ENCODE measurements at regions of chr1 and their contacts with region 1.

Region 1: DNA sequence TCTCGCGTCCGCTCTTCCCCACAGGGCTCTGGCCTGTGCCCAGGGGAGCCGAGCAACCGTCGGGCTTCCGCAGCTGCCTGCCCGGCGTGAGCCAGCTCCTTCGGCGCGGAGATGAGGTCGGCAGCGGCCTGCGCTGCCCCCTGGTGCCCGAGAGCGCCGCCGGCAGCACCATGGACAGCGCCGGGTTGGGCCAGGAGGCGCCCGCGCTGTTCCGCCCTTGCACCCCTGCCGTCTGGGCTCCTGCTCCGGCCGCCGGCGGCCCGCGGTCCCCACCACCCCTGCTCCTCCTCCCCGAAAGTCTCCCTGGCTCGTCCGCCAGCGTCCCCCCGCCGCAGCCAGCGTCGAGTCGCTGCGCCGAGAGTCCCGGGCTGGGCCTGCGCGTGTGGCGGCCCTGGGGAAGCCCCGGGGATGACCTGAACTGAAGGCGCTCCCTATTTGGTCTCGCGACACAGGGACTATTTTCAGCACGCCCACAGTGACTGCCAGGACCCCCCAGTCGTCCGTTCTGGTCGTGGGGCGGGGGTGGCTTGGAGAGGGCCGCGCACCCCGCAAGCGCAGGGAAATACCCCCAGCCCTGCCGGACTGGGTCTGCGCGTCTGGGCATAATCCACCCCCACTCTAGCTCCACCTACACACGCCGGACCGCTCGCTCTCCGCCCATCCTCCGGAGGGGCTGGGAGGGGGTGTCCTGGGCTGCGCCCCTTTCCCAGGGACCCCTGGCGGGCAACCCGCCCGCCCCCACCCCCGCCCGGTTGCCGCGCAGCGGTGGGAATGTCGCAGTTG is 1.3 kb downstream of the HES3 start:
- DNase-seq: peak; percentile 84
- ATAC-seq: peak; percentile 78
- H3K4me3 ChIP-seq: no peak overlapping the region
- H3K4me3 Mint-ChIP-seq: no peak overlapping the region
- H3K27ac ChIP-seq: no peak overlapping the region
- H3K27ac Mint-ChIP-seq: no peak overlapping the region
- H3K4me1 ChIP-seq: peaks cover 33% of the 10 kb centered on the region in 2 donors
- H3K4me1 Mint-ChIP-seq: peaks cover 20% of the 10 kb centered on the region
- H3K27me3 ChIP-seq: peaks cover 0 to 81% (median 45%) of the 10 kb centered on the region in 4 experiments
- H3K27me3 Mint-ChIP-seq: peaks cover 40% of the 10 kb centered on the region
- CTCF ChIP-seq: peak; percentile 72

Region 2: DNA sequence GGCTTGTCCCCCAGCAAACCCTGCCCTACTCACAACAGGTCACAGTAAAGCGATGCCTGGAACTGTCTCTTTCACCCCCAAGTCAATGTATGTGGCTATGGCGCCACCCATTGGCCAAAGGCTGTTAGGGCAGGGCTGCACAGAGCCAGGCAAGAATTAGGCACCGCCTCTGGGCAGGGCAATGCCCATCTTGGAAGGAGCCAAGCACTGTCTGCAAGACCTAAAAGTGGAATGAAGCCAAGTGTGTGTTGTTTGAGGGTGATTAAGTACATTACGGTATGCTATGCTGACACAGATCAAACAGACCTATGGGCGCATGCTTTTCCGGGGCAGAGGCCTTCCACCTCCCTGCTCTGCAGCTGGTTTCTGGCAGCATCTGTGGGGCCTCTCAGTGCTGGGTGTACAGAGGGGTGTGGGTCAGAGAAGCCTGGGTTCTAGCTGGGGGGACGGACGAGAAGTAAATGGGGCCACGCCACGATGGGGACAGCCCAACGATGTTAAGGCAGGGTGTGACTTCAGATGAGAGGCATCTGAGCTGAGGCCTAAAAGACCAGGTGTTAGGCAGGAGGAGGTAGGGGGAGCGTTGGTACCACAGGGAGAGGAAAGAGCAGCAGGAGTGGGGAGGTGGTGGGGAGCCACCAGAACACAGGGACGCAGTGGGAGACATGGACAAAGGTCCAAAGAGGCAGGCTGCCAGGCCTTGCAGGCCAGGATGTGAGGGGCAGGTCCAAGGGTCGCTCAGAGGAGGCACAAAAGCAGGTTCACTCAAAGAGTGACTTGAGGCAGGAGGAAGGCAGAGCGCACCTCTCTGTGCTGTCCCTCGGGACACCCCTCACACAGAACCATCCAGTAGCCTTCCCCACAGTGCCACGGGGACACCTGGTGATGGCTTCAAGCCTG is 98.5 kb after region 1 on chr1:
- CTCF ChIA-PET with region 1: interaction called, 4 read pairs
- POLR2A ChIA-PET with region 1: no interaction called
- intact Hi-C with region 1: loop called (anchors 5 kb)
- DNase-seq: peak; percentile 43
- ATAC-seq: peak; percentile 54
- H3K4me3 ChIP-seq: no peak overlapping the region
- H3K4me3 Mint-ChIP-seq: no peak overlapping the region
- H3K27ac ChIP-seq: no peak overlapping the region
- H3K27ac Mint-ChIP-seq: no peak overlapping the region
- H3K4me1 ChIP-seq: peaks cover 2 to 9% of the 10 kb centered on the region in 2 donors
- H3K4me1 Mint-ChIP-seq: peaks cover 6% of the 10 kb centered on the region
- H3K27me3 ChIP-seq: no peaks in the 10 kb centered on the region
- H3K27me3 Mint-ChIP-seq: no peaks in the 10 kb centered on the region
- CTCF ChIP-seq: peak; percentile 63

Region 3: DNA sequence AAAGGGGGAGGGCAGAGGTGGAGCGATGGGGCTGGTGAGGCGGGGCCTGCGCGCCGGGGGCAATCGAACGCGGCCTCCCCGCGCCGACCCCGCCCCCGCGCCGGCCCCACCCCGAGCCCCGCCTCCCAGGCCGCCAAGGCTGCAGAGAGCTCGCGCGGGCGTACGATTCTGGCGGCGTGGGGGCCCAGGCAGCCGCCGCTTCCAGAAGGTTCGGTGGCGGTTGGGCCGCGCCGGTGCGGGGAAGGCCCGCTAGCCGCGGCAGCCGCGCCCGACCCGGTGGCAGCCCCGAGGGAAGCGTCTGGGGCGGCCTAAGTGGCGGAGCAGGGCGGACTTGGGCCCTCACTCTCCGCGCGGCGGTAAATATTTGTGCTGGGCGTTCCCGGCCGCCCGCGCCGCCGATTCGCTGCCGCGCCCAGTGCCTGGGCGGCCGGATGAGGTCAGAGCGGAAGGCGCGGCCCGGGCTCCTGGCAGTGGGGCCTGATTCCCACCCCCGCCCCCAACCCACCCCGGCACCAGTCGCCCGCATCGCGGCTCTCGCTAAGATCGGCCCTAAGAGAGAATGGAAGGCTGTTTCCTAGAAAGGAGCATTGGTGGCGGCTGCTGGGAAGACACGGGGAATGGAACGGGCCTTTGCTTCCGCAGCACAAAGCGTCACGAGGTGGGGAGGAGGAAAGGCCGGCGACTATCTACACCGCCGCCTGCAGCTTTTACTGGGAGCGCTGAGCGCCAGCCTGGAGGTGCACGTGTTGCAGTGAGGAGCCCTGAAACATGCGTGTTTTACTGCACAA is 148.3 kb after region 1 on chr1 and contains the start of gene ACOT7:
- CTCF ChIA-PET with region 1: interaction called, 11 read pairs
- POLR2A ChIA-PET with region 1: no interaction called
- intact Hi-C with region 1: no loop called
- DNase-seq: peak; percentile 94
- ATAC-seq: peak; percentile 90
- H3K4me3 ChIP-seq: peak within 1 kb of the TSS; percentile 51 to 80 (median 64)
- H3K4me3 Mint-ChIP-seq: peak within 1 kb of the TSS; percentile 92
- H3K27ac ChIP-seq: peak within 1 kb of the TSS; percentile 84
- H3K27ac Mint-ChIP-seq: peak within 1 kb of the TSS; percentile 97
- H3K4me1 ChIP-seq: peaks cover 15 to 20% of the 10 kb centered on the region in 2 donors
- H3K4me1 Mint-ChIP-seq: peaks cover 16% of the 10 kb centered on the region
- H3K27me3 ChIP-seq: peaks cover 0 to 15% (median 0%) of the 10 kb centered on the region in 4 experiments
- H3K27me3 Mint-ChIP-seq: no peaks in the 10 kb centered on the region
- CTCF ChIP-seq: no peak
- total RNA-seq, gene ACOT7: 4.0 and 4.2 TPM in 2 replicates

Region 4: DNA sequence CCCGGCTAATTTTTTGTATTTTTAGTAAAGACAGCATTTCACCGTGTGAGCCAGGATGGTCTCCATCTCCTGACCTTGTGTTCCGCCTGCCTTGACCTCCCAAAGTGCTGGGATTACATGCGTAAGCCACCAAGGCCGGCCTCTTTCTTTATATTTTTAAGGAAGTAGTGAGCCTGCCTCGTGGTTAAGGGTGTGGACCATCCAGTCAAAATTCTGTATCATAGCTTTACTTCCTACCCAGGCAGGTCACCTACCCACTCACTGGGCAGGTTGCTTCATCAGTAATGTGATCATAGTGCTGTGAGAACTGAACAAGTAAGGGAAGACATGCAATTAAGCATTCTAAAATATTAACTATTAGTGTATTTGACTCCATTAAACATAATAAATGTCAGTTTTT is 156.4 kb after region 1 on chr1:
- CTCF ChIA-PET with region 1: interaction called, 51 read pairs
- POLR2A ChIA-PET with region 1: no interaction called
- intact Hi-C with region 1: loop called (anchors 1 kb)
- DNase-seq: no peak
- ATAC-seq: no peak
- H3K4me3 ChIP-seq: no peak overlapping the region
- H3K4me3 Mint-ChIP-seq: no peak overlapping the region
- H3K27ac ChIP-seq: no peak overlapping the region
- H3K27ac Mint-ChIP-seq: no peak overlapping the region
- H3K4me1 ChIP-seq: no peaks in the 10 kb centered on the region
- H3K4me1 Mint-ChIP-seq: no peaks in the 10 kb centered on the region
- H3K27me3 ChIP-seq: peaks cover 0 to 3% (median 0%) of the 10 kb centered on the region in 4 experiments
- H3K27me3 Mint-ChIP-seq: peaks cover 14% of the 10 kb centered on the region
- CTCF ChIP-seq: no peak

Region 5: DNA sequence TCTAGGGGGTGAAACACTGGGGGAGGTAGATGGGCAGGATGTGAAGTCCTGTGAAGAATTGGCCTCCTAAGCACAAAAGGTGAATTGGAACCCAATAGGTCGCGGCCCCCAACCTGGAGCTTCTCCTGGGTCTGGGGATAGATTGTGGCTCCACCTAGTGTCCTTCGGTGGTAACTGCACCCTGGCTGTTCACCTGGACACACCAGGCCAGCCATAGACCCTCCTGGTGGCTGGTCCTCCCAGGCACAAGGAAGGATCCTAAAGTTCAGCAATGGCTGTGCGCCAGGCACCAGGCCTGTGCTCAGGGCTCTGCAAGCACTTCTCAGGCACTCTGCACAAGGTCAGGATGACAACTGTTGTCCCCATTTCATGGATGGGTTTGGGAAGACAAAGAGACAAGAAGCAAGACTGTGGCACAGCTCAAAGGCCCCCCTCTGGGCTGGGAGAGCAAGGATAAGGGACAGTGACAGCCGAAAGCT is 192.8 kb after region 1 on chr1:
- CTCF ChIA-PET with region 1: interaction called, 30 read pairs
- POLR2A ChIA-PET with region 1: no interaction called
- intact Hi-C with region 1: loop called (anchors 1 kb)
- DNase-seq: peak; percentile 80
- ATAC-seq: peak; percentile 77
- H3K4me3 ChIP-seq: no peak overlapping the region
- H3K4me3 Mint-ChIP-seq: peak overlapping the region; percentile 56
- H3K27ac ChIP-seq: no peak overlapping the region
- H3K27ac Mint-ChIP-seq: no peak overlapping the region
- H3K4me1 ChIP-seq: peaks cover 3 to 5% of the 10 kb centered on the region in 2 donors
- H3K4me1 Mint-ChIP-seq: peaks cover 10% of the 10 kb centered on the region
- H3K27me3 ChIP-seq: peaks cover 0 to 29% (median 14%) of the 10 kb centered on the region in 4 experiments
- H3K27me3 Mint-ChIP-seq: peaks cover 32% of the 10 kb centered on the region
- CTCF ChIP-seq: peak; percentile 90

Measured in B cell (primary cell).